Activated naive CD4-positive, alpha-beta T cell treated with anti-CD3 and anti-CD28 coated beads, Interleukin-2, amount 10 ng/mL, durations not matched to agents 7 days and 5 days (primary cell): ENCODE measurements at regions of chr10 and their contacts with region 1.

Region 1: DNA sequence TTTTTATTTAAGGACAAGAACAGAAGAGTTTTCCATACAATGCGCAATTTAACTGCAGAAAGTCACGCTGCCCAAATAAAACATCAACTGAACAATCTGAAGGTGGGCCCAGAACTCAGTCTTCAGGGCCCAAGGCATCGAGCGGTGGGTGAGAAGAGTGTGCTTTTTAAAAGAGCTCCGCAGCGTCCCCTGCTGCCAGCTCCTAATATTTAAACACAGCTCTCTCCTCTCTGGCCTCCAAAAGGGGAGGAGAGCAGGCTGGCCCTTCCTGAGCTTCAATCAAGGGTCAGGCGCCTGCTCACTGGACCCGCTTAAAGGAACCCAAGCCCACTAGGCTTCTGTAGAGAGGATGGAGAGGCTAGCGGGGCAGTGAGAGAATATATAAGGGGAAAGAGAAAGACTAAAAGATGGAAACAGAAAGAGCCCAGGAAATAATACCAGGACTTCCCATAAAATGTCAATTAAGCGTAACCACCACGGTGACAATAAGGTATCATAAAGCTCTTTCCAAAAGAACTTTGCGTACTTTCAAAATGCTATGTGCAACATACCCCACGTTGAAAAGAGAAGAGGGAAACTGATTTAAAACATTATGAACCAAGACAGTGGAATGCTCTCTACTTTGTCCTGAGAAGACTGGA is 2.8 kb downstream of the FAM53B start:
- DNase-seq: peak; percentile 84
- H3K4me3 Mint-ChIP-seq: peak overlapping the region; percentile 72
- H3K27ac Mint-ChIP-seq: peak overlapping the region; percentile 82
- H3K4me1 Mint-ChIP-seq: peaks cover 74% of the 10 kb centered on the region
- H3K27me3 Mint-ChIP-seq: peaks cover 15% of the 10 kb centered on the region

Region 2: GRCh38 chr10:124267231-124267885 is 474.0 kb before region 1 on chr10:
- CTCF ChIA-PET with region 1: no interaction called
- DNase-seq: no peak
- H3K4me3 Mint-ChIP-seq: no peak overlapping the region
- H3K27ac Mint-ChIP-seq: no peak overlapping the region
- H3K4me1 Mint-ChIP-seq: no peaks in the 10 kb centered on the region
- H3K27me3 Mint-ChIP-seq: peaks cover 13% of the 10 kb centered on the region

Region 3: DNA sequence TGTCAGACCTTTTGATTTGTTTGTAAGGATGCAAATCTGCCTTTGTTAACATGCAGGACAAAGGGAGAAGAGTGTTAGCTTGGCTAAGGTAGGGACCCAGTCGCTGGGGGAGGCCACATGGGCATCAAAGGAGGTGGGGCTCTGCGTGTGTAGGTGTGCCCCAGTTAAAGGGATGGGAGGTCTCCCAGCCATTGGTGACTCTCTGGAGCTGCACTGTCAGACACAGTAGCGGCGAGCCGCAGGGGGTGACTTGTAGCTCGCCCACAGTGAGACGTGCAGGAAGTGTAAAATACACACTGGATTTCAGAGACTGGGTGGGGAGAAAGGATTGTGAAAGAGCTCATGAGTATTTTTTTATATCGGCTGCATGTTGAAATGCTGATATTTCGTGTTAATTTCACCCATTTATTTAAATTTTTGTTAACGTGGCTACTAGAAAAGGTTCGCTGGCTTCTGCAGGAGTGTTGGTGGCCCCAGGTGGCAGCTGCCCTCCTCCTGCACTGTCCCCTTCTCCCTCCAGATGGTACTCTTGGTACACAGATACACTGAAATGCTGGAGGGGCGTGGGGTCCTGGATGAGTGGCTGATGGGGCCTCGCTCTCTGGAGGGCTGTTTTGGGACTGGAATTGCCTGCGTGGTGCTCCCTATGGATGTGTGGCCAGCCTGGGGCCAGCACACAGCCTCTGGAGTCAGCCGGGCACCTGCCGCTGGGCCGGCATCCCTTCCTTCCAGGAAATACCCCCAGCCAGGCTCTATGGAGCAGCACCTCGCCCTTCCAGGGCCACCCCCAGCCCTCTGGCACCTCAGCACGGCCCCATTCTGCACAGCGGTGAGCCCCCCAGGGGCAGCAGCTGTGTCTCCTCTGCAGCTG is 220.6 kb before region 1 on chr10:
- CTCF ChIA-PET with region 1: no interaction called
- DNase-seq: no peak
- H3K4me3 Mint-ChIP-seq: no peak overlapping the region
- H3K27ac Mint-ChIP-seq: no peak overlapping the region
- H3K4me1 Mint-ChIP-seq: no peaks in the 10 kb centered on the region
- H3K27me3 Mint-ChIP-seq: no peaks in the 10 kb centered on the region

Region 4: DNA sequence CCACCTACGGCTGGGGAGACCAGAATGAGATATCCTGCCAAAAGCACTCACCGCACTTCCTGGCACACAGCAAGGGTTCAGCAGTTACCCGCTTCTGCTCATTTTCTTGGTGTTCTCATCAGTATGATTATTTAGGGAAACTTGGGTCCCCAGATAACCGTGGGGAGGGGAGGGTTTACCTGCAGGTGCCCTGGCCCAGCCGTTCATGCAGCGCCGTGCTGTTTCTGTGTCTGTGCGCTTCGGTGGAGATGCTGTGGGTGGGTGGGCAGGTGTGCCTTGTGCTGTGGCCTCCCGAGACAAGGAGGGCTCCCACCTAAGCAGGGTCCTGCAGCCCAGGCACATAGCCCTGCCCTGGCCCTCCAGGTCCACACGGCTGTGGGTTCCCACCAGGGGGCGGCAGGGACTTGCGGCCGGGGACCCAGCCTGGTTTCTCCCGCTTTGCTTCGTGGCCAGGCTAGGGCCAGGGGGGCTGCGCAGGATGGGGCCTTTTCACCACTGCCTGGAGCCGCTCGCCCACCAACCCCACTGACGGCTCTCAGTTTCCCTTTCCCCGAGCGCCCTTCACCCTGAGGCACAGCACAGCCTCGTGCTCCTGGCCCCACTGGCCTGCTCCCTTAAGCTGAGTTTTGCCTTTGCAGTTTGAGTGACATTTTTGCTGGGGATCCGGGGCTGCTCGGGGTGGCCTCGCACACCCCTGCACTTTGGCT is 201.3 kb before region 1 on chr10:
- CTCF ChIA-PET with region 1: interaction called, 26 read pairs
- DNase-seq: peak; percentile 75
- H3K4me3 Mint-ChIP-seq: no peak overlapping the region
- H3K27ac Mint-ChIP-seq: no peak overlapping the region
- H3K4me1 Mint-ChIP-seq: peaks cover 7% of the 10 kb centered on the region
- H3K27me3 Mint-ChIP-seq: peaks cover 21% of the 10 kb centered on the region

Region 5: DNA sequence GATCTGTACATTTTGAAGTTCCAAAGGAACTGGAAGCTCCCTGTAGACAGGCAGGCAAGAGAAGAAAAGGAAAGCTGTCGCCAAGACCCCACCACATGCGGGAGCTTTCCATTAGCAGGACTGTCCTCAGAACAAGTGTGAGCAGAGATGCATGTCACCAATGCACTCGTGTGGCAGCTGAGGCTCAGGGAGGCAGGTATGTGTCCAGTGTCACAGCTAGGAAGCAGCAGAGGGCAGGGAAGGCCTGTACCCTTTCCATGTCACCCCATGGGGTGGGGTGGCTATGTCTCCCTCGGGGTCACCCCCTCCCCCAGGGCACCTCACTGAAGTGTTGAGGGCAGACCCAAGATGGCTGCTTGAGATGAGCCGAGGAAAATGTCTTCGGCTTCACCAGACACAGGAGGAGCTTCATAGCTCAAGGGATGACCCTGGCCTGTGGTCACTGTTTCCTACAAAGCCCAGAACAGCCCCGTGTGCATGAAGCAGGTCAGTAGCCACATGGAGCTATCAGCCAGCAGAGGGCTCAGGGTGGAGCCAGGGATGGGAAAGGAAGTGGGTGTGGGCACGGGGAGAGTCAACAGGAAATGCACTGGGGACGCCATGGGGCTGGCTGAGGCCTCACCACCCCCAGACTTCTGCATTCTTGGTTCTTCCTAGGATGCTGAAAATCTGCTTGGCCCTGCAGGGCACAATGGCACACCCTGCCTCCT is 93.8 kb before region 1 on chr10:
- CTCF ChIA-PET with region 1: interaction called, 31 read pairs
- DNase-seq: peak; percentile 88
- H3K4me3 Mint-ChIP-seq: peak overlapping the region; percentile 70
- H3K27ac Mint-ChIP-seq: peak overlapping the region; percentile 99
- H3K4me1 Mint-ChIP-seq: peaks cover 90% of the 10 kb centered on the region
- H3K27me3 Mint-ChIP-seq: no peaks in the 10 kb centered on the region

Region 6: GRCh38 chr10:124703778-124704427 is 37.5 kb before region 1 on chr10:
- CTCF ChIA-PET with region 1: interaction called, 60 read pairs
- DNase-seq: no peak
- H3K4me3 Mint-ChIP-seq: no peak overlapping the region
- H3K27ac Mint-ChIP-seq: peak overlapping the region; percentile 95
- H3K4me1 Mint-ChIP-seq: peaks cover 99% of the 10 kb centered on the region
- H3K27me3 Mint-ChIP-seq: no peaks in the 10 kb centered on the region

Region 7: DNA sequence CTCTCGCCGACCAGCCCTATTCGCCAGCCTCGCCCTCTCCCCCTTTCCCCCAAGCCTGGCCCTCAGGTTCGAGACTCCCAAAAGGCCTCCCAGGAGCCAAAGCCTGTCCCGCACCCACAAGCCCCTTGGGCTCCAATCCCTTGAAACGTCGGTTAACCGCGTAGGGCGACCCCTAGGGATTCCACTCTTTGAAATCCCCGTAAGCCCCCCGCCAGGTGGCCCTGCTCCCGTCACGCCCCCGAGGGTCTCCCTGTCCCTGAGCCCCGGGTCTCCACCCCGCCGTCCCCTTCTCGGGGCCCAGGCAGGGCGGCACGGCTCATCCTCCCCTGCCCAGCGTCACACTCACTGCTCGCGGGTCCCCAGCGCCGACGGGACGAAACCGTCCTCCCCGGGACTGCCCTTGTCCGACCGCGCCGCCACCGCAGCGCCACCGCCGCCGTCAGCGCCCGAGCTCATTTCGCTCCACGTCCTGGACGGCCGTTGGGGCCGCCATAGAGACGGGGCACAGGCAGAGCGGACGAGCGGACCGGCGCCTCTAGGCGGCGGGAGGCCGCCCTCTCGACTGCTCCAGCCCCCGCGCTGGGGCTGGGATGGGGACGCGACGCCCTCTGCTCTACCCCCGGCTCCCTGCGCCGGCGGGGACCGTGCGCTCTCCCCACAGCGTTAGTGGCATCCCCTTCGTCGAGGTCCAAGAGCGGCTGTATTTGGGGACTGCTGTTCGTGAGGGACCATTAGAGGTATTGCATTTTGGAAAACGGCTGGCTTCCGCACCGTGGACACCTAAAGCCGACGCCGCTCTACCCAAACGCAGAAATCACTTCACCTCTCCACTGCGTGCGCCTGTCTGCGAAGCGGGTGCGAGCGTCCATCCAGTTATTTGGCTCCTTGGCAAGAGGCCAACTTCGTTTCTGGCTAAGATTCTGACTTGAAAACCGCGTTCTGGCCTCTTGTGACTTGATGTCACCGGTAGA is 50.3 kb after region 1 on chr10 and contains the start of gene EEF1AKMT2:
- CTCF ChIA-PET with region 1: no interaction called
- DNase-seq: peak; percentile 87
- H3K4me3 Mint-ChIP-seq: peak within 1 kb of the TSS; percentile 88
- H3K27ac Mint-ChIP-seq: peak within 1 kb of the TSS; percentile 94
- H3K4me1 Mint-ChIP-seq: peaks cover 29% of the 10 kb centered on the region
- H3K27me3 Mint-ChIP-seq: peaks cover 5% of the 10 kb centered on the region

Region 8: GRCh38 chr10:124827474-124827873 is 86.1 kb after region 1 on chr10:
- CTCF ChIA-PET with region 1: interaction called, 12 read pairs
- DNase-seq: peak; percentile 25
- H3K4me3 Mint-ChIP-seq: no peak overlapping the region
- H3K27ac Mint-ChIP-seq: no peak overlapping the region
- H3K4me1 Mint-ChIP-seq: no peaks in the 10 kb centered on the region
- H3K27me3 Mint-ChIP-seq: no peaks in the 10 kb centered on the region

Region 9: DNA sequence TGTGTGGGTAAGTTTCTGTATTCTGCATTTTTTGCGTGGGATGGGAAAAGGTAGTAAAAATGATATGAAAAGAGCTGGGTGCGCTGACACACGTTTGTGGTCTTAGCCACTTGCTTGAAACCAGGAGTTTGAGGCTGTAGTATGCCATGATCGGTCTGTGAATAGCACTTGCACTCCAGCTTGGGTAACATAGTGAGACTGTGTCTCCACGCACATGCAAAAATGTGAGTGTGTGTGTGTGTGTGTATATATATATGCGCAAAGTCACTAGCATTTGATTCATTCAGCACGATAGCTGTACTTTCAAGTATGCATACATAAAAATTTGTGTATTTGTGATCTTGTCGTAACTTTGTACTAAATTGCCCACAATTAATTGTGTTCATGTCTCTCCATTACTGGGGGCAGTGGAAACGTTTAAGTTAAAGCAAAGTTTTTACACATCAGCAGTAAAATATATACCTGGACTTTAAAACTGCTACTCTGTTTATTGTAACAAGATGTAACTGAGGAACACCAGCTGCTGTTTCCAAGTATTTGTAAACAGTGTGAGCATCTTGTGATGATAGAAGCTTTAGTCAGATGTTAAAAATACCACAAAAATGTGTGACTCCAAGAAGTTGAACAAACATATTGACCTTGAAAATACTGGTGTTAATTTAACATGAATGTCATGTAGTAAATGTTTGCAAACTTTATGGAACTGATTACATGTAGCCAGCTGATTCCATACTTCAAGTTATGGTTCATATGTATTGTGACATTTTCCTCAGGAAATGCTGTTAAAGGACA is 202.1 kb after region 1 on chr10:
- CTCF ChIA-PET with region 1: no interaction called
- DNase-seq: no peak
- H3K4me3 Mint-ChIP-seq: no peak overlapping the region
- H3K27ac Mint-ChIP-seq: no peak overlapping the region
- H3K4me1 Mint-ChIP-seq: peaks cover 5% of the 10 kb centered on the region
- H3K27me3 Mint-ChIP-seq: no peaks in the 10 kb centered on the region